Posterior vena cava (tissue), 2 donors: ENCODE measurements at regions of chr17 and their contacts with region 1.

Region 1: GRCh38 chr17:38922538-38923297 is 2.7 kb upstream of the LASP1NB start:
- DNase-seq: peak; percentile 83

Region 2: GRCh38 chr17:38853292-38854219 is 69.2 kb before region 1 on chr17 and contains the start of gene RPL23:
- intact Hi-C with region 1: no loop called
- DNase-seq: peak; percentile 98
- total RNA-seq, gene RPL23: 1,179 to 1,230 TPM

Region 3: GRCh38 chr17:38869526-38870258 is 53.0 kb before region 1 on chr17 and contains the start of gene LASP1:
- intact Hi-C with region 1: loop called in 1 of 2 experiments (anchors 5 kb)
- DNase-seq: peak; percentile 96
- total RNA-seq, gene LASP1: 95.2 to 119 TPM